Colonic mucosa (tissue), 4 donors: ENCODE measurements at regions of chr11 and their contacts with region 1.

Region 1: GRCh38 chr11:8682303-8683114 is at the starts of genes RPL27A and TRIM66:
- DNase-seq: peak; percentile 99
- H3K4me3 ChIP-seq: peak within 1 kb of the TSS; percentile 76
- H3K27ac ChIP-seq: peak within 1 kb of the TSS; percentile 99
- H3K4me1 ChIP-seq: peaks cover 16% of the 10 kb centered on the region
- H3K27me3 ChIP-seq: no peaks in the 10 kb centered on the region
- CTCF ChIP-seq: no peak
- total RNA-seq, gene RPL27A: 701 to 1,045 TPM
- total RNA-seq, gene TRIM66: 5.9 to 10.6 TPM

Region 2: GRCh38 chr11:8765294-8765693 is 82.8 kb after region 1 on chr11:
- intact Hi-C with region 1: no loop called
- DNase-seq: no peak
- H3K4me3 ChIP-seq: no peak overlapping the region
- H3K27ac ChIP-seq: no peak overlapping the region
- H3K4me1 ChIP-seq: no peaks in the 10 kb centered on the region
- H3K27me3 ChIP-seq: no peaks in the 10 kb centered on the region
- CTCF ChIP-seq: no peak

Region 3: GRCh38 chr11:8777907-8778767 is 95.6 kb after region 1 on chr11:
- intact Hi-C with region 1: no loop called
- DNase-seq: no peak
- H3K4me3 ChIP-seq: no peak overlapping the region
- H3K27ac ChIP-seq: peak overlapping the region; percentile 26
- H3K4me1 ChIP-seq: no peaks in the 10 kb centered on the region
- H3K27me3 ChIP-seq: no peaks in the 10 kb centered on the region
- CTCF ChIP-seq: no peak

Region 4: DNA sequence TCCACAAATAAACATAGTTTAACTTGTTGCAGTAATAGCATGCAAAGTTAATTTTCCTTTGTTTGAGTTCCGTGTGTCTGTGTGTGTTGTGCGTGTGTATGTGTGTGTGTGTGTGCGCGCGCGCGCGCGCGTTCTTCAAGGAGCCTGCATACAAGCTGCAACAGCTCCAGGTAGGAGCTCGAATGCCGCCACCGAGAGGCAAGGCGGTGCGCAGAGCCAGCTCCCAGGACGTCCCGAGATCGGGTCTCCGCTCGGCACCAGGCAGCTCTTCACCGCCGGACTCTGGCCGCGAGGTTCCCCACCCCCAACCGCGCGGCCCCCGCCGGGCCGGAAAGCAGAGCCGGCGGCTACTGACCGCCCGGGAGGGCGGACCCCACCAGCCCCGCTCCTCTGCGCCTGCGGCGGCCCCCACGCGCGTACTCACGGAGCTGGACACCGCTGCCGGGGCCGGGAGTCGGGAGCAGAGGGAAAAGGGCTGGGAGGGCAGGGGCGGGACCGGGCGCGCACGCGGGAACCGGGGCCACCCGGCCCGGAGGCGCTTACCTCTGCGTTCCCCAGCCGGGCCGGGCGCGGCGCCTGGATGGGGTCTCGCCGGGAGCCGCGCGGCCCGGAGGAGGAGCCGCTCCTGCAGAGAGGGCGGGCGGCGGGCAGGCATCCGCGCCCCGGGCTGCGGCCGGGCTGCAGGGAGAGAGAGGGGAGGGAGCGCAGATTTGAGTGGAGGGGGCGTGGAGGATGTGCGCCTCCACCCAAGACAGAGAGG is 188.1 kb after region 1 on chr11:
- intact Hi-C with region 1: loop called (anchors 2 kb)
- DNase-seq: peak; percentile 81
- H3K4me3 ChIP-seq: peak overlapping the region; percentile 89
- H3K27ac ChIP-seq: peak overlapping the region; percentile 80
- H3K4me1 ChIP-seq: no peaks in the 10 kb centered on the region
- H3K27me3 ChIP-seq: no peaks in the 10 kb centered on the region
- CTCF ChIP-seq: no peak

Region 5: DNA sequence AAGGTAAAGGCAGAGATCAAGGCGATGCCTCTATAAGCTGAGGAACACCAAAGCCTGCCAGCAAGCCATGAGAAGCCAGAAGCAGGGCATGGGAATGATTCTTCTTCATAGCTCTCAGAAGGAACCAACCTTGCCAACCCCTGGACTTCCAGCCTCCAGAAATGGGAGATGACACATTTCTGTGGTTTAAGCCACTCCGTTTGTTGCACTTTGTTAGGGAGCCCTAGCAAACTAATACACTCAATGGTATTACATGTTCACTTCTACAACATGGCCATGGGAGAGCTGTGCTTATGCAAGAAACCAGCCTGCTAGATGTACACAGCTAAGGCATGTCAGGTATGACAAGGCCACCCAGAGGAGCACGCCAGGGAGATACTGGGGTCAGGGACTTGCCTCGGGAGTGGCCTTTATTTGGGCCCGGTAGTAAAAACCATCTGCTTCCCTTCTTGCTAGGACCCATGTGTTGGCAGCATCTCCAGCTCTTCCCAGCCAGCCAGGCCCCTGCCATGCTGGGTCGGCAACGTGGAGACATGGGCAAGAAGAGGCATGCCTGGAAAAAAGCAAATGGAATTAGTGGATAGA is 246.6 kb after region 1 on chr11:
- intact Hi-C with region 1: no loop called
- DNase-seq: no peak
- H3K4me3 ChIP-seq: no peak overlapping the region
- H3K27ac ChIP-seq: no peak overlapping the region
- H3K4me1 ChIP-seq: no peaks in the 10 kb centered on the region
- H3K27me3 ChIP-seq: no peaks in the 10 kb centered on the region
- CTCF ChIP-seq: no peak

Region 6: GRCh38 chr11:9017773-9018172 is 335.3 kb after region 1 on chr11:
- intact Hi-C with region 1: no loop called
- DNase-seq: peak; percentile 50
- H3K4me3 ChIP-seq: no peak overlapping the region
- H3K27ac ChIP-seq: no peak overlapping the region
- H3K4me1 ChIP-seq: no peaks in the 10 kb centered on the region
- H3K27me3 ChIP-seq: no peaks in the 10 kb centered on the region
- CTCF ChIP-seq: no peak